ENCODE measurements at regions of chr6 and their contacts with region 1.

Region 1: DNA sequence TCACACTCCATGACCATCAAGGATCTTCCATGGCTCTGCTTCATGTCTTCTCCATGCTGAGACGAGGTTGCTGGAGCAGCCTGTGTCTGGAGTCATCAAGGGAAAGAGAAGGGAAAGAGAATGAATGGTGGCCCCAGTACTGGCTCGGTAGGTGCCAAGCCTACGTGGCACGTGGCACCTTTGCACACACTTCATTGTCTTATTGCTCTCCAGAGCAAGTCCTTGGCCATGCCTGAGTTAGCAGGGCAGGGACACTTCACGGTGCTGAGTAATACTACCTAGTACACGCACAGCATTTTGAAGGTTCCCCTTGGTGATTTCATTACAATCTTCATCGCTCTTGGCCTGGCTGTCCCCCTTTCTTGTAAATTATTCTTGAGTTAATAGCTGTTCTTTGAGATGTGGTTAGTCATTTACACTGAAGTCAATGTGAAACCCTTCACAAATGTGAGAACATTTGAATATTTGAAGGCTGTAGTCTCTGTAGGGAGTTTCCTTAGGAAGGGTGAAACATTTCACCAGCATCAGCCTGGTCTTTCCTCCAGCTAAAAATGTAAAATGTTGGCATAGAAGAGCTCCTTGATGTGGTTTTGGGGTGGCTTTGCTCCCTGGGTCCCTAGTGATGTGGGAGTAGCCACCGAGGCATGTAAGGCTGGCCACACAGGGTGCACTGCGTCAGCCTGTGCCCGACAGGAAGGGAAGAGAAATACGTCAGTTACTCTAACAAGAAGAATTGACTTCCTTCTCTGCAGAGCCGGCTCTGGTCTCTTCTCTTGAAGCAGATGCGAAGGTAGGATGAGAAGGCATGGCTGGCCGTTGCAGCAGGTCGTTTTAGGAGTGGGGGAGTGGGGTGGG is at the start of gene SYTL3:
- DNase-seq: peak; percentile 58 to 93 (median 90)
- ATAC-seq: peak; percentile 78
- H3K4me3 ChIP-seq: peak within 1 kb of the TSS; percentile 44
- H3K4me3 Mint-ChIP-seq: peak within 1 kb of the TSS; percentile 66 to 87 (median 80)
- H3K27ac ChIP-seq: peak within 1 kb of the TSS; percentile 83
- H3K27ac Mint-ChIP-seq: peak within 1 kb of the TSS; percentile 90 to 99 (median 96)
- H3K4me1 ChIP-seq: peaks cover 38 to 46% of the 10 kb centered on the region in 2 donors
- H3K4me1 Mint-ChIP-seq: peaks cover 42 to 75% (median 67%) of the 10 kb centered on the region in 7 donors
- H3K27me3 ChIP-seq: no peaks in the 10 kb centered on the region
- H3K27me3 Mint-ChIP-seq: no peaks in the 10 kb centered on the region
- total RNA-seq, gene SYTL3: 25.8 to 67.0 (median 31.1) TPM

Region 2: GRCh38 chr6:157885211-157885788 is 764.2 kb before region 1 on chr6:
- CTCF ChIA-PET with region 1: no interaction called
- POLR2A ChIA-PET with region 1: no interaction called
- intact Hi-C with region 1: loop called (anchors 2 to 10 kb)
- DNase-seq: peak in 7 of 9 donors; percentile 74 to 90 (median 86)
- ATAC-seq: peak; percentile 89
- H3K4me3 ChIP-seq: no peak overlapping the region
- H3K4me3 Mint-ChIP-seq: peak overlapping the region; percentile 30 to 78 (median 54)
- H3K27ac ChIP-seq: peak overlapping the region; percentile 93
- H3K27ac Mint-ChIP-seq: peak overlapping the region; percentile 86 to 99 (median 96)
- H3K4me1 ChIP-seq: peaks cover 0 to 33% of the 10 kb centered on the region in 2 donors
- H3K4me1 Mint-ChIP-seq: peaks cover 31 to 92% (median 85%) of the 10 kb centered on the region in 7 donors
- H3K27me3 ChIP-seq: no peaks in the 10 kb centered on the region
- H3K27me3 Mint-ChIP-seq: peaks cover 0 to 3% (median 0%) of the 10 kb centered on the region in 5 donors

Region 3: GRCh38 chr6:158231551-158232315 is 417.8 kb before region 1 on chr6:
- CTCF ChIA-PET with region 1: no interaction called
- POLR2A ChIA-PET with region 1: no interaction called
- intact Hi-C with region 1: loop called in 1 of 2 experiments (anchors 5 kb)
- DNase-seq: peak; percentile 57 to 84 (median 71)
- ATAC-seq: peak; percentile 86
- H3K4me3 ChIP-seq: peak overlapping the region; percentile 62
- H3K4me3 Mint-ChIP-seq: peak overlapping the region; percentile 85 to 96 (median 92)
- H3K27ac ChIP-seq: peak overlapping the region; percentile 77
- H3K27ac Mint-ChIP-seq: peak overlapping the region; percentile 86 to 94 (median 89)
- H3K4me1 ChIP-seq: peaks cover 6 to 18% of the 10 kb centered on the region in 2 donors
- H3K4me1 Mint-ChIP-seq: peaks cover 22 to 44% (median 38%) of the 10 kb centered on the region in 7 donors
- H3K27me3 ChIP-seq: no peaks in the 10 kb centered on the region
- H3K27me3 Mint-ChIP-seq: peaks cover 0 to 14% (median 0%) of the 10 kb centered on the region in 5 donors

Region 4: GRCh38 chr6:158660333-158660754 is 10.8 kb after region 1 on chr6:
- CTCF ChIA-PET with region 1: interaction called, 15 read pairs
- POLR2A ChIA-PET with region 1: interaction called, 78 read pairs
- intact Hi-C with region 1: loop called in 1 of 2 experiments (anchors 1 kb)
- DNase-seq: peak in 7 of 9 donors; percentile 62 to 82 (median 78)
- ATAC-seq: peak; percentile 80
- H3K4me3 ChIP-seq: no peak overlapping the region
- H3K4me3 Mint-ChIP-seq: peak overlapping the region; percentile 25 to 77 (median 70)
- H3K27ac ChIP-seq: peak overlapping the region; percentile 54
- H3K27ac Mint-ChIP-seq: peak overlapping the region; percentile 29 to 97 (median 90)
- H3K4me1 ChIP-seq: peaks cover 9 to 36% of the 10 kb centered on the region in 2 donors
- H3K4me1 Mint-ChIP-seq: peaks cover 15 to 76% (median 62%) of the 10 kb centered on the region in 7 donors
- H3K27me3 ChIP-seq: no peaks in the 10 kb centered on the region
- H3K27me3 Mint-ChIP-seq: no peaks in the 10 kb centered on the region

Region 5: DNA sequence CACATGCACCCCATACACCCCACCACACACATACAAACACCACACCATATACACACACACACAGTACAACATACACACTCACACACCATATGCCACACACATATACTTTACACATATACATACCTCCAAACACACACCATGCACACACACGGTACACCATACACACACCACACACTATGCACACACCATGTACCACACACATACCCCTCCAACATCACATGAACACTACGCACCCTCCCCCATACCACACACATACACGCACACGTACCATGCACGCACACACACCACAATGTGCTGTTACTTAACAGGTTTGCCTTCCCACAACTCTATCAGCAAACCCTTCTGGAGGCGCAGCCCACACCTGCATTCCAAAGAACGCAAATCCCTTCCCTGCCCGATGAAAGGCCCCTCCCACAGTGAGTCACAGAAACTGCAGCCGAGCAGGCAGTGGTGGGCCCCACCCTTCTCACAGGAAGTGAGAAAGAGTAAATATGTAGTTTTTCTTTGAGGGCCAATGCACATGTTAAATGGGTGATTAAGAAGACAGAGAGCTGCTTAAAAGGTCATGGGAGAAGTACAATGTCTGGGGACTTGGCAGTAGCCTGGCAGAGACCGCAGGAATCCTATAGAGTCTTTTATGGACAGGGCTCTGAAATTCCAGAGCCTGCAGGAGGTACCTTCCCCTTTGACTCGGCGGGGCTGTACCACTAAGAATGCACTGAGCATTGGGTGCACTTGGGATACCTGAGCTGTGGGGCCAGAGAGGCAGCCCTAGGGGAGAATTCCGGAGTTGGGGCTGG is 203.8 kb after region 1 on chr6:
- CTCF ChIA-PET with region 1: no interaction called
- POLR2A ChIA-PET with region 1: no interaction called
- intact Hi-C with region 1: loop called (anchors 1 kb)
- DNase-seq: peak; percentile 54 to 93 (median 86)
- ATAC-seq: peak; percentile 79
- H3K4me3 ChIP-seq: peak overlapping the region; percentile 55
- H3K4me3 Mint-ChIP-seq: no peak overlapping the region
- H3K27ac ChIP-seq: peak overlapping the region; percentile 83
- H3K27ac Mint-ChIP-seq: no peak overlapping the region
- H3K4me1 ChIP-seq: peaks cover 47 to 55% of the 10 kb centered on the region in 2 donors
- H3K4me1 Mint-ChIP-seq: peaks cover 16 to 42% (median 33%) of the 10 kb centered on the region in 7 donors
- H3K27me3 ChIP-seq: no peaks in the 10 kb centered on the region
- H3K27me3 Mint-ChIP-seq: no peaks in the 10 kb centered on the region

Region 6: DNA sequence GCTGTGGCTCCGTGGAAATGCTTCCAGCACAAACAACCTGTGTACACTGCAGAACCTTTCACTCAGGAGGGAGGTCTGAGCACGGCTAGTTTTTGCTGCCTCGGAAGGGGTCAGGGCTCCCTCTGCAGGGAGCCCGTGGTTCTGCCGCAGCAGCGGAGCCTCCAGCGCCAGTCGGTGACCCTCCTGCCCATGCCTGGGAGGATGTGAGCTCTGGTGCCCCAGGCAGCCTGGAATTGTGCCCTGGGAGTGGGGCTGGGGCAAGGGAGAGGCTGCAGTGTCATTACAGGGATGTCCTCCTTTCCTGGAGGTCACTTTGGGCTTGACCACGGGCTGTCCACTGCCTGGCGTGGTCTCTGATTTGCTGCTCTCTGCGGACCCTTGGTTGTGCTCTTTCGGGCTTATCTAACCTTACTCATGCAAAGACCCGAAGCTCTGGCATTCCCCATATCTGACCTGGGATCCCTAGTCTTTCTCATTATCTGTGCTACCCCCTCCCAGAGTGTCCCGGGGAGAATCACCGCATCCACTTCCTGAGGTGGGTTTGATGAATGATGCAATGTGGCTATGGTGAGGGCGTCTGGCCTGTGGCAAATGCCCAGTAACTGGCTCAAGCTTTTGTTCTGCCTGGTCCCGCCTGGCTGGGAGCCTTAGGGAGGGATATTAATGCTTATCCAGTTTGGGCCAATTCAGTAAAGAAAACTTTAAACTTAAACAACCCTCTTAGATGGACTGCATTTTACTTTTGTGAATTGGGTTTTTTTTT is 454.8 kb after region 1 on chr6:
- CTCF ChIA-PET with region 1: interaction called, 3 read pairs
- POLR2A ChIA-PET with region 1: interaction called, 3 read pairs
- intact Hi-C with region 1: loop called (anchors 5 kb)
- DNase-seq: peak; percentile 68 to 81 (median 77)
- ATAC-seq: peak; percentile 79
- H3K4me3 ChIP-seq: peak overlapping the region; percentile 5
- H3K4me3 Mint-ChIP-seq: peak overlapping the region in 9 of 10 donors; percentile 40 to 69 (median 54)
- H3K27ac ChIP-seq: peak overlapping the region; percentile 79
- H3K27ac Mint-ChIP-seq: peak overlapping the region; percentile 82 to 98 (median 91)
- H3K4me1 ChIP-seq: peaks cover 58 to 73% of the 10 kb centered on the region in 2 donors
- H3K4me1 Mint-ChIP-seq: peaks cover 58 to 96% (median 86%) of the 10 kb centered on the region in 7 donors
- H3K27me3 ChIP-seq: no peaks in the 10 kb centered on the region
- H3K27me3 Mint-ChIP-seq: no peaks in the 10 kb centered on the region

Region 7: GRCh38 chr6:160477901-160478300 is 1828.4 kb after region 1 on chr6:
- CTCF ChIA-PET with region 1: no interaction called
- POLR2A ChIA-PET with region 1: no interaction called
- intact Hi-C with region 1: no loop called
- DNase-seq: no peak
- ATAC-seq: no peak
- H3K4me3 ChIP-seq: no peak overlapping the region
- H3K4me3 Mint-ChIP-seq: no peak overlapping the region
- H3K27ac ChIP-seq: no peak overlapping the region
- H3K27ac Mint-ChIP-seq: no peak overlapping the region
- H3K4me1 ChIP-seq: no peaks in the 10 kb centered on the region
- H3K4me1 Mint-ChIP-seq: peaks cover 0 to 17% (median 13%) of the 10 kb centered on the region in 7 donors
- H3K27me3 ChIP-seq: no peaks in the 10 kb centered on the region
- H3K27me3 Mint-ChIP-seq: peaks cover 0 to 21% (median 0%) of the 10 kb centered on the region in 5 donors

Measured in naive thymus-derived CD4-positive, alpha-beta T cell (primary cell).